Esophagus squamous epithelium (tissue), 5 donors: ENCODE measurements at regions of chr14 and their contacts with region 1.

Region 1: GRCh38 chr14:102524466-102525218 is 15.1 kb upstream of the ANKRD9 start:
- DNase-seq: peak; percentile 79
- H3K4me3 ChIP-seq: peak overlapping the region; percentile 42 to 76 (median 60)
- H3K27ac ChIP-seq: peak overlapping the region; percentile 88 to 97 (median 96)
- H3K4me1 ChIP-seq: peaks cover 15 to 46% (median 21%) of the 10 kb centered on the region in 3 donors
- H3K27me3 ChIP-seq: no peaks in the 10 kb centered on the region
- CTCF ChIP-seq: peak; percentile 95 to 100 (median 100)
- POLR2A ChIP-seq: peak in 2 of 4 donors; percentile 4 to 62

Region 2: GRCh38 chr14:102479777-102480176 is 44.9 kb before region 1 on chr14:
- intact Hi-C with region 1: no loop called
- DNase-seq: no peak
- H3K4me3 ChIP-seq: peak overlapping the region in 1 of 4 donors; percentile 37
- H3K27ac ChIP-seq: no peak overlapping the region
- H3K4me1 ChIP-seq: peaks cover 0 to 20% (median 5%) of the 10 kb centered on the region in 3 donors
- H3K27me3 ChIP-seq: no peaks in the 10 kb centered on the region
- CTCF ChIP-seq: no peak
- POLR2A ChIP-seq: no peak

Region 3: DNA sequence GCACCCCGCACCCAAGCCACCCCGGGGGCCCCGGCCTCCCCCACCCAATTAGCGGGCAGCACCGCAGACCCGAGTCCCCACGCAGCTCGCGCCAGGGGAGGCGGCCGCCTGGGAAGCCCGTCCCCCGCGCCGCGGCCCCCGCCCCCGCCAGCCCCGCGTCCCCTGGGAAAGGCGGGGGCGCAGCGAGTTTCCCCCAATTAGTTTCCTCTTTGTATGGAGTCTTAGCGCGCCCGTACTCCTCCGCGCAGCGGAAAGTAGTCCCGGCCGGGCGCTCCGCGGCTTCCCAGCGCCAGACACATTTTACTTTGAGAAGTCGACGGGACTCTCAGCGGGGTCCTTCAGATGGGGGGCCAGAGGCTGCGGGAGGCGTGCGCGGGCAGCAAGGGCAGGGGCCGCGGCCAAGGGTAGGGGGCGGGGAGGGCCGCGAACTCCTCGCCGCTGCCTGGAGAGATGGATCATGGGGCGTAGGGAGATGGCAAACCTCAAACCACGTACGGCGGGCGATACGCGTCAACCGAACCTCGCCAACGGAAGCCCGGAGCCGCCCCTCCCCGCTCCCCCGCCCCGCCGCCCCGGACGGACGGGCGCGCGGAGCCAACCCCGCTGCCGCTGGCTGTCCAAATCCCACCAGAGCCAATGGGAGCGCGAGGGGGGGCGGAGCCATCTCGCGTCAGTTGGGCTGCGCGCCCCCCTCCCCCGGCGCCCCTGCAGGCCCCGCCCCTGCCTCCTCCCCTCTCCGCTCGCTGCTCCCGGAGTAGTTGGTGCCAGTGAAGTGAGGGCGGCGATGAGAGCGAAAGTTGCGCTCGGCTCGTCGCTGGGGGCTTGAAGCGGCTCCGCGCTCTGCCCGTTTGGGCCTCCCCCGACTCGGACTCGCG is 67.5 kb after region 1 on chr14 and contains the start of gene RCOR1:
- intact Hi-C with region 1: loop called (anchors 5 kb)
- DNase-seq: peak; percentile 94
- H3K4me3 ChIP-seq: peak within 1 kb of the TSS; percentile 72 to 94 (median 88)
- H3K27ac ChIP-seq: peak within 1 kb of the TSS; percentile 96 to 100 (median 100)
- H3K4me1 ChIP-seq: peaks cover 4 to 55% (median 14%) of the 10 kb centered on the region in 3 donors
- H3K27me3 ChIP-seq: no peaks in the 10 kb centered on the region
- CTCF ChIP-seq: peak in 1 of 6 experiments; percentile 5
- POLR2A ChIP-seq: peak in 3 of 4 donors; percentile 29 to 87 (median 66)
- total RNA-seq, gene RCOR1: 25.6 to 56.9 (median 35.2) TPM

Region 4: GRCh38 chr14:102622262-102622885 is 97.7 kb after region 1 on chr14:
- intact Hi-C with region 1: no loop called
- DNase-seq: no peak
- H3K4me3 ChIP-seq: no peak overlapping the region
- H3K27ac ChIP-seq: no peak overlapping the region
- H3K4me1 ChIP-seq: peaks cover 0 to 12% (median 4%) of the 10 kb centered on the region in 3 donors
- H3K27me3 ChIP-seq: no peaks in the 10 kb centered on the region
- CTCF ChIP-seq: no peak
- POLR2A ChIP-seq: no peak